ENCODE measurements at regions of chr11 and their contacts with region 1.

Region 1: GRCh38 chr11:35050541-35050995 is 88.4 kb upstream of the CD44 start:
- DNase-seq: no peak
- ATAC-seq: peak; percentile 22
- H3K4me3 Mint-ChIP-seq: peak overlapping the region; percentile 56
- H3K27ac Mint-ChIP-seq: peak overlapping the region; percentile 82
- H3K4me1 Mint-ChIP-seq: peaks cover 65% of the 10 kb centered on the region
- H3K27me3 Mint-ChIP-seq: no peaks in the 10 kb centered on the region

Region 2: GRCh38 chr11:34654491-34655334 is 395.9 kb before region 1 on chr11:
- CTCF ChIA-PET with region 1: no interaction called
- POLR2A ChIA-PET with region 1: no interaction called
- intact Hi-C with region 1: no loop called
- DNase-seq: peak; percentile 20
- ATAC-seq: no peak
- H3K4me3 Mint-ChIP-seq: no peak overlapping the region
- H3K27ac Mint-ChIP-seq: peak overlapping the region; percentile 38
- H3K4me1 Mint-ChIP-seq: peaks cover 53% of the 10 kb centered on the region
- H3K27me3 Mint-ChIP-seq: peaks cover 38% of the 10 kb centered on the region

Region 3: GRCh38 chr11:35066783-35067423 is 16.3 kb after region 1 on chr11:
- CTCF ChIA-PET with region 1: interaction called, 7 read pairs
- POLR2A ChIA-PET with region 1: interaction called, 3 read pairs
- intact Hi-C with region 1: loop called in 1 of 2 experiments (anchors 2 kb)
- DNase-seq: peak; percentile 61
- ATAC-seq: peak; percentile 85
- H3K4me3 Mint-ChIP-seq: peak overlapping the region; percentile 15
- H3K27ac Mint-ChIP-seq: peak overlapping the region; percentile 73
- H3K4me1 Mint-ChIP-seq: peaks cover 32% of the 10 kb centered on the region
- H3K27me3 Mint-ChIP-seq: peaks cover 3% of the 10 kb centered on the region

Measured in activated CD4-positive, alpha-beta T cell treated with anti-CD3 and anti-CD28 coated beads for 36 hours (primary cell).